ENCODE measurements at regions of chr10 and their contacts with region 1.

Region 1: DNA sequence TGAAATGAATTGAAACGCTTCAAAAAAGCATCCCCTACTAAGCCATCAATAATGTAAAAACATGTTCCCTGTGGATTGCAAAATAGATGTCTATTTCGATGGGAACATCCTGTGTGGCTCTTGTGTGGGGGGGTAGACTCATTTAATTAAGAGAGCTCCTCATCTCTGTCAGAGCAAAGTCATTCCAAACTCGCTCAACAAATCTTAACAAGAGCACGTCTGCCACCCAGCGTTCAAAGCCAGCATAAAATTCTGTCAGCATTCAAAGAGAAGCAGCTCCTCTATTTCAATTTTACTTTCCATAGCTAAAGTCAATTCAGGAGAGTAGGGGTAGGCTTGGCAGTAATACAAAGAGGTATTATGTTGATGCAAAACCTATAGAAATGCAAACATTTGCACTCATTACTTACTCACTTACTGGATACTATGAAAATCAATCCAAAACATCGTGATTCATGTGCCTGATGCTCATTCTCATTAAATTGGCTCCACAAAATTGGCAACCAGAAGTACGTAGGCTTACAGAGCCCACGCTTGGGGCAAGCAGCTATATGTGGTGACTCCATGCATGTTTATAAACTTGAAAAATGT is 114.9 kb downstream of the IPMK start:
- DNase-seq: peak; percentile 63
- H3K4me3 Mint-ChIP-seq: no peak overlapping the region
- H3K27ac Mint-ChIP-seq: no peak overlapping the region
- H3K4me1 Mint-ChIP-seq: no peaks in the 10 kb centered on the region
- H3K27me3 Mint-ChIP-seq: peaks cover 5% of the 10 kb centered on the region

Region 2: GRCh38 chr10:57338823-57339558 is 813.8 kb before region 1 on chr10:
- CTCF ChIA-PET with region 1: interaction called, 3 read pairs
- POLR2A ChIA-PET with region 1: no interaction called
- intact Hi-C with region 1: loop called (anchors 1 kb)
- DNase-seq: no peak
- H3K4me3 Mint-ChIP-seq: no peak overlapping the region
- H3K27ac Mint-ChIP-seq: no peak overlapping the region
- H3K4me1 Mint-ChIP-seq: no peaks in the 10 kb centered on the region
- H3K27me3 Mint-ChIP-seq: no peaks in the 10 kb centered on the region

Region 3: DNA sequence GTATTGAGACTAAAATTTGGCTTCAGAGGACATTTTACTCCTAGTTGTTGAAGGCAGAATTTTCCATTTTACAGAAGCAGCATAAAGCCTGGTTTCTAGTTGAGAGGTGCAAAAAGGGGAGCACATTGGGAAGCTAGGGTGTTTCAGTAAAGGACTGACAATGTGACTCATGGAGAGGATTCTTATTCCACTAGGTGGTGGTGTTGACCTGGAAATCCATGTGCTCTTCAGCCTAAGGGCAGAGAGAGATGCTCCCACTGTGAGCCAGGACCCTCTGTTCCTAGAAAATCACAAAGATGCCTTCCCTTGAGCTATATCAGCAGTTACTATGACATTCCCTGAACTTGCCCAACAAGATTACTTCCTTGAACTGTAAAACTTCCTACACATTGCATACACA is 572.8 kb before region 1 on chr10:
- CTCF ChIA-PET with region 1: no interaction called
- POLR2A ChIA-PET with region 1: no interaction called
- intact Hi-C with region 1: loop called (anchors 5 kb)
- DNase-seq: no peak
- H3K4me3 Mint-ChIP-seq: no peak overlapping the region
- H3K27ac Mint-ChIP-seq: no peak overlapping the region
- H3K4me1 Mint-ChIP-seq: no peaks in the 10 kb centered on the region
- H3K27me3 Mint-ChIP-seq: no peaks in the 10 kb centered on the region

Measured in activated CD4-positive, alpha-beta memory T cell treated with anti-CD3 and anti-CD28 coated beads for 36 hours (primary cell).